ENCODE measurements at regions of chr11 and their contacts with region 1.

Region 1: GRCh38 chr11:115314330-115314920 is 189.8 kb downstream of the CADM1 start:
- DNase-seq: no peak

Region 2: GRCh38 chr11:115078461-115079438 is 235.7 kb before region 1 on chr11:
- intact Hi-C with region 1: loop called (anchors 5 kb)
- DNase-seq: peak; percentile 23 to 90 (median 66)

Region 3: GRCh38 chr11:115290893-115291292 is 23.5 kb before region 1 on chr11:
- intact Hi-C with region 1: no loop called
- DNase-seq: peak in 8 of 42 donors; percentile 24 to 61 (median 34)